ENCODE measurements at regions of chr4 and their contacts with region 1.

Region 1: DNA sequence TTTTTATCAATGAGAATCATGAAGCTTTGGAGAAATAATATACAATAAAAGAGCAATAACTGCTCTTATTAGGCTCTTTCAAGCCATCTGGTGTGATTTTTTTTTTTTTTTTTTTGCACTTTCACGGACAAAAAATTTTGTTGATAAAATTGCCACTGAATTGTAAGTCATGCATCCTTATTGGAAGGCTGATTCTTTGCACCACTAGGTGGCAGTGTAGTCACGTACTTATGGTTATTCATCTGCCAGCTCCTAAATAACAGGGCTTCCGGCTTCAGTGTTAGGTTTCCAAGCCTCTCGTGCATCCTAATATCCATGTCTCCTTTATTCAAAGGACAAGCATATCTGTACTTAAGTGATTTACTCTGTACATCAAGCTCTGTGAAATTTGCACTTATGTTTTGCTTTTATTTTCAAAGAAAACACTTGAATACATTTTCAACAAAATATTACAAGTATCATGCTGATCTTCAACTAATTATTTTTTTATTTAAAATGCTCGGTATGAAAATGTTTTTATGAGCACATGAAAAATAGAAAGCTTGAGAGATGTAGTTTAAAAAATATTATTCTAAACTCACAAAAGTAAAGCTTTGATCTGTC is 1578.3 kb upstream of the TENM3 start:
- DNase-seq: peak in 5 of 10 donors; percentile 48 to 80 (median 69)

Region 2: GRCh38 chr4:179867300-179867878 is 797.5 kb before region 1 on chr4:
- intact Hi-C with region 1: loop called (anchors 2 kb)
- DNase-seq: peak in 8 of 10 donors; percentile 28 to 79 (median 58)

Region 3: GRCh38 chr4:180169394-180169793 is 495.5 kb before region 1 on chr4:
- intact Hi-C with region 1: no loop called
- DNase-seq: no peak

Region 4: GRCh38 chr4:180456928-180457327 is 207.9 kb before region 1 on chr4:
- intact Hi-C with region 1: loop called (anchors 10 kb)
- DNase-seq: no peak

Measured in posterior cingulate gyrus (tissue), 11 donors.